ENCODE measurements at regions of chr16 and their contacts with region 1.

Region 1: DNA sequence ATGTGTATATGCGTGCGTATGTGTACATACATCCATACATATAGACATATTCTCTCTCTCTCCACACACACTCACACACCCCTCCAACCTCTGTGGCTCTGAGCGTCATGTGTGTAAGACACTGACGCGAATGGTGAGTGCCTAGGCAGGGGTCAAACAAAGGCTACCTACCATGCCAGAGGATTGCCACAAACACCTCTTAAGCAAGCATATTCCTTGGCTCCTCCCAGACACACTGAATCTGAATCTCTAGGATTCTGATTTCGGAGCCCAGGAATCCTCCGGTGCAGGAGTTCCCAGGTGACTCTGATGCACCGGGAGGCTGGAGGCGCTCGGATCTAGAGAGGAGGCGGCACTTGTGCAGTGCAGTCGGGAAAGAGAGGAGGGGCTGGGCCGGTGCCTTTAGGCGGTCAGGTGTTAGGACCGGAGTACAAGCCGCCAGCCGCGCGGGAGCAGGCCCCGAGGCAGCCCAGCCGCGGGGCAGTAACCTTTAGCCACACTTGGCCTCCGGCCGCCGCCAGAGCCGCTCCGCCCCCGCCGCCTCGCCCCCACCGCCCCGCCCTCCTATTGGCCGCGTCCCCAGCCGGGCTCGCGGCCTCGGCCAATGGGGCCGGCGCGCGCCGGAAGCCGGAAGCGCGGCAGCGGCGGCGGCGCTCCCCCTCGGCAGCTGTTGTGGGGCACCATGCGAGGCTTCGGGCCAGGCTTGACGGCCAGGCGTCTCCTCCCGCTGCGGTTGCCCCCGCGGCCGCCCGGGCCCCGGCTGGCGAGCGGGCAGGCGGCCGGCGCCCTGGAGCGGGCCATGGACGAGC is at the start of gene MLYCD:
- DNase-seq: peak; percentile 63
- H3K4me3 Mint-ChIP-seq: peak within 1 kb of the TSS; percentile 86
- H3K27ac Mint-ChIP-seq: peak within 1 kb of the TSS; percentile 10
- H3K4me1 Mint-ChIP-seq: peaks cover 22% of the 10 kb centered on the region
- H3K27me3 Mint-ChIP-seq: no peaks in the 10 kb centered on the region
- total RNA-seq, gene MLYCD: 2.0 to 2.3 TPM

Region 2: GRCh38 chr16:83807710-83808572 is 90.7 kb before region 1 on chr16 and contains the start of gene HSBP1:
- CTCF ChIA-PET with region 1: no interaction called
- intact Hi-C with region 1: loop called (anchors 1 kb)
- DNase-seq: peak; percentile 95
- H3K4me3 Mint-ChIP-seq: peak within 1 kb of the TSS; percentile 98
- H3K27ac Mint-ChIP-seq: peak within 1 kb of the TSS; percentile 95
- H3K4me1 Mint-ChIP-seq: peaks cover 37% of the 10 kb centered on the region
- H3K27me3 Mint-ChIP-seq: no peaks in the 10 kb centered on the region
- total RNA-seq, gene HSBP1: 72.1 to 72.8 TPM

Region 3: GRCh38 chr16:83826146-83826913 is 72.3 kb before region 1 on chr16:
- CTCF ChIA-PET with region 1: interaction called, 7 read pairs
- intact Hi-C with region 1: loop called (anchors 1 kb)
- DNase-seq: peak; percentile 88
- H3K4me3 Mint-ChIP-seq: no peak overlapping the region
- H3K27ac Mint-ChIP-seq: no peak overlapping the region
- H3K4me1 Mint-ChIP-seq: peaks cover 3% of the 10 kb centered on the region
- H3K27me3 Mint-ChIP-seq: no peaks in the 10 kb centered on the region